ENCODE measurements at regions of chr2 and their contacts with region 1.

Region 1: GRCh38 chr2:176126929-176127773 is 2.4 kb upstream of the HOXD8 start:
- DNase-seq: no peak
- H3K4me3 Mint-ChIP-seq: no peak overlapping the region
- H3K27ac Mint-ChIP-seq: peak overlapping the region; percentile 26
- H3K4me1 Mint-ChIP-seq: peaks cover 8% of the 10 kb centered on the region
- H3K27me3 Mint-ChIP-seq: peaks cover 70% of the 10 kb centered on the region

Region 2: GRCh38 chr2:175929850-175930249 is 197.3 kb before region 1 on chr2:
- intact Hi-C with region 1: no loop called
- DNase-seq: no peak
- H3K4me3 Mint-ChIP-seq: no peak overlapping the region
- H3K27ac Mint-ChIP-seq: no peak overlapping the region
- H3K4me1 Mint-ChIP-seq: no peaks in the 10 kb centered on the region
- H3K27me3 Mint-ChIP-seq: no peaks in the 10 kb centered on the region

Region 3: DNA sequence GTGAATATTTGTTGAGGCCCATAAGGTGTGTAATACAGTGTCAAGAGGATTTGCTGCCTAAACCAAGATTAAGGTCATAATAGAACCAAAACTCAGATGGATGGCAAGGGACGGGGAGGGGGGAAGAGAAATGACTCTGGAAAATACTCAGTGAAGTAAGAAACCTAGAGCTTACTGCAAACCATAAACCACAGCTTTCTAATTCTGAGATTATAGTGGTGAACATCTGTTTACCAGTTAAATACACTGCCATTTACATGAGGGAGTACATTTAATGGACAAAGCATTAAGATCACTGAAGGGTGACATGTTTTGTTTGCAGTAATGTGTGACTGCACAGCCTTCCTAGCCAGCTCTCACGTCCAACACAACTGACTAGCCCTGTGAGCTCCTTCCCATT is 63.2 kb before region 1 on chr2:
- intact Hi-C with region 1: no loop called
- DNase-seq: no peak
- H3K4me3 Mint-ChIP-seq: no peak overlapping the region
- H3K27ac Mint-ChIP-seq: no peak overlapping the region
- H3K4me1 Mint-ChIP-seq: peaks cover 8% of the 10 kb centered on the region
- H3K27me3 Mint-ChIP-seq: peaks cover 76% of the 10 kb centered on the region

Region 4: DNA sequence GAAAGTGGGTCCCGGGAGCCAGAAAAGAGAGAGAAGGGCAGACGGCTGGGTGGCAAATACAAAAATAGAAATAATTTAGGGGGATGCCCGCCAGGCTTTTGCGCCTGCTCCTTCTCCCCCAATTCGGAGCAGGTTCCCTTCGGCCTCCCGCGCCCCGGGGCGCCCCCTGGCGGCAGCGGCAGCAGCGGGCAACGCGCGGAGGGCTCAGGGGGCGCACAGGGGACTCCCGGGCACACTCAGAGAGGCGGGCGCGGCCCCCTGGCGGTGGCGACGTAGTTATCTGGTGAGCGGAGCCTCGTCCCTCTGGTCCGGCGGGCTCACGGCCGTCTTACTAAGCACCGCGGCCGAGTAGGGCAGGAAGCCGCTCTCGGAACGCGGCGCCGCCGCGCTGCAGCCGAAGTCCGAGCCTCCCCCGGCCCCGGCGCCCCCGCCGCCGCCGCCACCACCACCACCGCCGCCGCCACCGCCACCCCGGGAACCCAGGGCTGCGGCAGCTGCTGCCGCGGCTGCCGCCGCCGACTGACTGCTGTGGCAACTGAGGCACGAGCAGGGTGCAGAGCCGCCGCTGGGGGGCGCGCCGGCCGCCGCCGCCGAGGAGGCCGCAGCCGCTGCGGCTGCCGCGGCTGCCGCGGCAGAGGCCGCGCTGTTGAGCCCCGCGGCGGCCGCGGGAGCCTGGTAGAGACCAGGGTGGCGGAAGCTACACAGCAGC is 47.2 kb before region 1 on chr2:
- intact Hi-C with region 1: loop called (anchors 2 kb)
- DNase-seq: no peak
- H3K4me3 Mint-ChIP-seq: no peak overlapping the region
- H3K27ac Mint-ChIP-seq: peak overlapping the region; percentile 76
- H3K4me1 Mint-ChIP-seq: peaks cover 5% of the 10 kb centered on the region
- H3K27me3 Mint-ChIP-seq: peaks cover 69% of the 10 kb centered on the region

Region 5: DNA sequence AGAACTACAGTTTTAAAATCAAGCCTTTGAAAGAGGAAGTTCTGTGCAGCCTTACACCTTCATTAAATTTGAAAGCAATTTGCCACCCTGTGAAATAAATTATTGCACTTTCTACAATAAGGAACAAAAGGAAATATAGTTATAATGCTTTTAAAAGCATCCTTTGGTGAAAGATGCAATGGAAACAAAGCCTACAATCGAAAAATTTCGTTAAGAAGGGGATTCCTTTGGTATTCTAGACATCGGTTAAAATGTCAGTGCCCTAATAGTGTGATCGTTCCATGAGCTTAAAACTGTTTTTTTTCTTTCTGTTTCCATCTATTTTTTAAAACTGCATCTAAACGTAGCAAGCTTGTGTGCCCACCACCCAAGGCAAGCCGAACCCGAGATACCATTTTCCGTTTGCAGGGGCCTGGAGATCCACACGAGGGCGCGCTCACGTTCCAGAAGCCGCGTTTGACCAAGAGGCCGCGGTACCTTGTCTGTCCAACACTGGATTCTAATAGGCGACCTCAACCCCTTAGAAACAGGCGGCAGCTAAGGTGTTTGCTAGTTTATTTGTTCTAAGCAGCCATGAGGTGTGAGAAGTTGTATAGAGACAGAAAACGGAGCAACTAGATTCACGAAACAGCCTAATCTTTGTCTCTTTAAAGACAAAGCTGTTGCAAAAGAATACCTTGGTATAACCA is 16.0 kb before region 1 on chr2:
- intact Hi-C with region 1: loop called (anchors 2 kb)
- DNase-seq: no peak
- H3K4me3 Mint-ChIP-seq: no peak overlapping the region
- H3K27ac Mint-ChIP-seq: no peak overlapping the region
- H3K4me1 Mint-ChIP-seq: peaks cover 6% of the 10 kb centered on the region
- H3K27me3 Mint-ChIP-seq: peaks cover 73% of the 10 kb centered on the region

Region 6: GRCh38 chr2:176161819-176162626 is 34.9 kb after region 1 on chr2:
- intact Hi-C with region 1: loop called (anchors 5 kb)
- DNase-seq: no peak
- H3K4me3 Mint-ChIP-seq: no peak overlapping the region
- H3K27ac Mint-ChIP-seq: no peak overlapping the region
- H3K4me1 Mint-ChIP-seq: no peaks in the 10 kb centered on the region
- H3K27me3 Mint-ChIP-seq: peaks cover 88% of the 10 kb centered on the region

Region 7: DNA sequence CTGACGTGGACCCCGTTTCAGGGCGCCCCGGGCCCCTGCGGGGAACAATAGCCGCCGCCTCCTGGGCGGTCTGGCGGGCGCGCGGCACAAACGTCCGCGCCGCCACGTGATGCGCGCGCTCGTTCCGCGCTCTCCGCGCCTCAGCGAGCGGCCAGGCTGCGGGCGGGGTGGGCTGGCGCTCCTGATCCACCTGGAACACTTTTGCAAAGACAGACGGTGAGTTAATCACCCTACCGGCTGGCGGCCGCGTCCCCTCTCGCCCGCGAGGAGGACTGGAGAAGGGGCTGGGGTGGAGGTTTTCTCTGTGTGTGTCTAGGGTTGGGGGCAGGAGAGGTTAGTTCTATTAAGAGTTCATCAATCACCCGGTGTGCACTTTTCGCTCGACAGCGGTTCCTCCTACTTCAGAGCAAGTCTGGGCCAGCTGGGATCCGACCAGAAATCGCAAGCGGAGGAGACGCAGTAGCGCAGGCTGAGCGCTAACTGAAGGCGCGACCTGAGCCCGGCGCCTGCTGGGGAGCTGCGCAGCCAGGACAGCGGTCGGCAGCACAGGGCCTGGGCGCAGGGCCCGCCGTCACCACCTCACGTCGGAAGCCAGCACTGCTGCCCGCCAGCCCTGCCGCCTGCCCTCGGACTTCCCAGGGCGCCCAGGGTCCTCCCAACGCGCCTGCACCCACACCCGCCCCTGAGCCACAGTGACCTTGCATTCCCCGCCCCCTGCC is 51.0 kb after region 1 on chr2:
- intact Hi-C with region 1: no loop called
- DNase-seq: no peak
- H3K4me3 Mint-ChIP-seq: peak overlapping the region; percentile 27
- H3K27ac Mint-ChIP-seq: no peak overlapping the region
- H3K4me1 Mint-ChIP-seq: peaks cover 9% of the 10 kb centered on the region
- H3K27me3 Mint-ChIP-seq: peaks cover 86% of the 10 kb centered on the region

Region 8: GRCh38 chr2:176212276-176212675 is 85.1 kb after region 1 on chr2:
- intact Hi-C with region 1: no loop called
- DNase-seq: no peak
- H3K4me3 Mint-ChIP-seq: no peak overlapping the region
- H3K27ac Mint-ChIP-seq: no peak overlapping the region
- H3K4me1 Mint-ChIP-seq: no peaks in the 10 kb centered on the region
- H3K27me3 Mint-ChIP-seq: peaks cover 13% of the 10 kb centered on the region

Region 9: GRCh38 chr2:176653479-176654443 is 526.6 kb after region 1 on chr2:
- intact Hi-C with region 1: loop called (anchors 2 kb)
- DNase-seq: peak; percentile 11
- H3K4me3 Mint-ChIP-seq: no peak overlapping the region
- H3K27ac Mint-ChIP-seq: no peak overlapping the region
- H3K4me1 Mint-ChIP-seq: peaks cover 12% of the 10 kb centered on the region
- H3K27me3 Mint-ChIP-seq: peaks cover 52% of the 10 kb centered on the region

Region 10: GRCh38 chr2:177148477-177149154 is 1021.5 kb after region 1 on chr2:
- intact Hi-C with region 1: loop called (anchors 5 kb)
- DNase-seq: peak; percentile 65
- H3K4me3 Mint-ChIP-seq: peak overlapping the region; percentile 90
- H3K27ac Mint-ChIP-seq: no peak overlapping the region
- H3K4me1 Mint-ChIP-seq: peaks cover 15% of the 10 kb centered on the region
- H3K27me3 Mint-ChIP-seq: peaks cover 72% of the 10 kb centered on the region

Measured in activated T-helper 2 cell treated with anti-CD3 and anti-CD28 coated beads, Interferon-gamma antibody, Interleukin-2, Interleukin-4, amounts not matched to agents 10 μg/mL and 5 μg/mL and 100 μg/mL, durations not matched to agents 14 hours and 24 hours and 36 hours (primary cell).